Left cardiac atrium (tissue), 4 donors: ENCODE measurements at regions of chr7 and their contacts with region 1.

Region 1: GRCh38 chr7:106153891-106154449 is 41.9 kb upstream of the SYPL1 start:
- DNase-seq: peak; percentile 84
- ATAC-seq: peak; percentile 97 to 98

Region 2: GRCh38 chr7:106056513-106057203 is 97.3 kb before region 1 on chr7:
- intact Hi-C with region 1: loop called (anchors 1 to 2 kb)
- DNase-seq: peak; percentile 75
- ATAC-seq: peak; percentile 92 to 94

Region 3: DNA sequence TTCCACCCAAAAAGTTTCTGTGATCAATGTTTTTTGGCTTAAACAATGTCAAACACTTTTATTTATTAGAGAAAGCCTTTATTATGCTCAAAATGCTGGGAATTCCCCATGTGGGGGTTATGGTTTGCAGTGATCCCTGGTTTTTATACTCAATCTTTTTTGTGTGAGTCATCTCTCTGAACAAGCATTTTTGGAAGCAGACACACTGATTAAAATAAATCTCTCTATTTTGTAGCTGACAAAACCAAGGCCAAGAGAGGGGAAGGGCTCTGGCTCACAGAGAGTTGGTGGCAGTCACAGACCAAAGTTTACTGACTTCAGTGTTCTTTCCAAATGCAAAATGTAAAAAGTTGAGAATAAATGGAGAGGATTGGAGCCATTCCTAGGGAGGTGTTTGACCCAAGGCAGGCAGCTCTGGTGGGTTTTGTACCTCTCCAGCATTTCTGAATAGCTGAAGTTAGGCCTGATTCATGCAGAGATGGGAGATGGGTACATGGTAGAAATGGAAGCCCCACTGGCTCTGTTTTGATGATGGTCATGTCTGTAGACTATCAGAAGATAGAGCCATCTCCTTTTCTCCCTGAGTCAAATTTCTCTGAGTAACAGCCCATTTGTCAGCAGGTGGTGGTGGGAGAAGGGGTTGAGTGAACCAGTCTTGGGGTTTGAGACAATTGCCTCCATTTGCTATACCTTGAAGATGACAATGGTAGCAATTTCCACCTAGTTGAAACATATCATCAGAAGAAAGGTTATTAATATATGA is 176.2 kb after region 1 on chr7:
- intact Hi-C with region 1: no loop called
- DNase-seq: no peak
- ATAC-seq: peak; percentile 27 to 87